Activated CD8-positive, alpha-beta T cell treated with anti-CD3 and anti-CD28 coated beads for 36 hours (primary cell): ENCODE measurements at regions of chrX and their contacts with region 1.

Region 1: DNA sequence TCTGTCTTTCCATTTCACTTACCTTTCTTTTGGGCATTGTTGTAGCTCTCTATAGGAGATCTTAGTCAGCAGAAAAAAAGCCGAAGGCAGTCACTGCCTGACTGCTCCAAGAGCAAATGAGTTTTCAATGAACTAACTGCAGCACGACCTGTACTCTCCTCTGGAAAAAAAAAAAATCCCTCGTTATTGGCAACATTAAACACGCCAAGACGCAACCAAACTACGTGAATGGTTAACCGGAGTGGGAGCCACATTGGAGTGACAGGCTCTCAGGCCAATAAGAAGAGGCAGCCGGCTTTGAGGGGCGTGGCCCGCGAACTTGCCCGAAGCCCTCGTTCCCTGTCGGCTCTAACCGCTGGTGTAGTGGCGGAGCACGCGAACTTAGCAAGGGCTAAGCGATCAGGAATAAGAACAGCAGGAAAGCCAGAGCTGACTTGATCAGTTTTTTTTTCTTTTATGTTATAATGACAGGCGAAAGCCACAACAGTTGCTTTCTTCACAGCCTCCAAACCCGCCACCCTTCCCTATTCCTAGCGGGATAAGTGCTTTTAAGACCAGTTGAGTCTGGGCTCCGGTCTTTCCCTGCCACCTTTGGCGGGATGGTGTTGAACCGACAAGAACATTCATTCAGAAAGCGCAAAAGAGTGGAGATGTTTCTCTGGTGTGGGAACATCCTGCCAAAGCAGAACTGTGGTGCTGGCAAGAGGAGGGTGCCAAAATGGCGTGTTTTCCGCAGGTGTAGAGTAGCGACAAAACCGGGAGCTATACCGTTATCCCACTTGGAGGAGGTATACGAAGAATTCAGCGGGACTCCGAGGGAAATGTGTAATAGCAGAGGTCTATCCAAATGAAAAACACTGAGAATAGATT is 80.0 kb downstream of the HMGN5 start:
- DNase-seq: peak; percentile 88
- ATAC-seq: peak; percentile 95
- H3K4me3 Mint-ChIP-seq: peak overlapping the region; percentile 90
- H3K27ac Mint-ChIP-seq: peak overlapping the region; percentile 85
- H3K4me1 Mint-ChIP-seq: peaks cover 8% of the 10 kb centered on the region
- H3K27me3 Mint-ChIP-seq: peaks cover 2% of the 10 kb centered on the region
- CTCF ChIP-seq: no peak

Region 2: GRCh38 chrX:80808160-80808735 is 313.5 kb before region 1 on chrX:
- CTCF ChIA-PET with region 1: interaction called, 3 read pairs
- POLR2A ChIA-PET with region 1: no interaction called
- intact Hi-C with region 1: loop called (anchors 5 kb)
- DNase-seq: peak; percentile 84
- ATAC-seq: peak; percentile 67
- H3K4me3 Mint-ChIP-seq: peak overlapping the region; percentile 88
- H3K27ac Mint-ChIP-seq: peak overlapping the region; percentile 95
- H3K4me1 Mint-ChIP-seq: peaks cover 28% of the 10 kb centered on the region
- H3K27me3 Mint-ChIP-seq: no peaks in the 10 kb centered on the region
- CTCF ChIP-seq: no peak

Region 3: DNA sequence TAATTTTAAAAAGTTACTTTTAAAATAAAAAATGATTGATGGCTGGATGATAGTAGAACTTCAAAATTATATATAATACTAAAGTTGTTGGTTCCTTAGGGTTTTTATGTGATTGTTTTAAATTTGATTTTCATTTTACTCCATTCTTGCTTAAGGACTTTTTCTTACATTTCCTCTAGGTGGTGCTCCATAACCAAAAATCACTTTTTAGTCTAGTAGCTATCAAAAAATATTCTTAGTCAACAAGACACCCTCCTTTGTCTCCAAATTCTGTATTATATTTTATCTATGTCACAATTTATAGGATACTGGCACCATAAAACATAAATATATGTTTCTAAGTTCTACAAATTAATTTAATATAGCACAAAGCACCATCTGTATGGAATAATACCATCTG is 244.9 kb before region 1 on chrX:
- CTCF ChIA-PET with region 1: interaction called, 3 read pairs
- POLR2A ChIA-PET with region 1: no interaction called
- intact Hi-C with region 1: loop called (anchors 2 kb)
- DNase-seq: no peak
- ATAC-seq: no peak
- H3K4me3 Mint-ChIP-seq: no peak overlapping the region
- H3K27ac Mint-ChIP-seq: no peak overlapping the region
- H3K4me1 Mint-ChIP-seq: no peaks in the 10 kb centered on the region
- H3K27me3 Mint-ChIP-seq: no peaks in the 10 kb centered on the region
- CTCF ChIP-seq: peak; percentile 28

Region 4: DNA sequence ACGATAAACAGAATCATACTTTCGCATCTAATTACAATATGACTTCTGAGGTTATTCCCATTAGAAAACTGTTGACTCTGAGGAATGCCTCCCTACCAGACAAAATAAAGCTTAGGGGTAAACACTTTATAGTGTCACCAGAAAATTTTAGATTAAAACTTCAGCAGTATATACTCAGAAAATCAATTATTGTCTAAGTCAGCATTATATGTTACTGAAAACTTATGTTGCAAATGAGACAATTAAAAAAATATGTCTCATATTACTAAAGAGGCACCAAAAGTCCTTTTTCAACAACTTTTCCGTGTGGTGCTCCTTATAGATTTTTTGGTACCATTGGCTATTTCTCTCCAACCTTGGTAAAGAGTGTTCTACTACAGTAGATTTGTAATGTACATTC is 11.5 kb before region 1 on chrX:
- CTCF ChIA-PET with region 1: no interaction called
- POLR2A ChIA-PET with region 1: no interaction called
- intact Hi-C with region 1: no loop called
- DNase-seq: no peak
- ATAC-seq: no peak
- H3K4me3 Mint-ChIP-seq: no peak overlapping the region
- H3K27ac Mint-ChIP-seq: no peak overlapping the region
- H3K4me1 Mint-ChIP-seq: no peaks in the 10 kb centered on the region
- H3K27me3 Mint-ChIP-seq: no peaks in the 10 kb centered on the region
- CTCF ChIP-seq: no peak